ENCODE measurements at regions of chr2 and their contacts with region 1.

Region 1: GRCh38 chr2:74876081-74876886 is 42.4 kb downstream of the HK2 start:
- DNase-seq: no peak
- H3K4me3 ChIP-seq: no peak overlapping the region
- H3K27ac ChIP-seq: peak overlapping the region; percentile 26 to 34
- H3K4me1 ChIP-seq: peaks cover 0 to 10% (median 3%) of the 10 kb centered on the region in 4 donors
- H3K27me3 ChIP-seq: no peaks in the 10 kb centered on the region
- CTCF ChIP-seq: peak; percentile 65 to 74

Region 2: GRCh38 chr2:74690571-74690970 is 185.7 kb before region 1 on chr2:
- intact Hi-C with region 1: loop called (anchors 2 kb)
- DNase-seq: no peak
- H3K4me3 ChIP-seq: no peak overlapping the region
- H3K27ac ChIP-seq: no peak overlapping the region
- H3K4me1 ChIP-seq: no peaks in the 10 kb centered on the region
- H3K27me3 ChIP-seq: no peaks in the 10 kb centered on the region
- CTCF ChIP-seq: peak; percentile 51 to 61

Region 3: DNA sequence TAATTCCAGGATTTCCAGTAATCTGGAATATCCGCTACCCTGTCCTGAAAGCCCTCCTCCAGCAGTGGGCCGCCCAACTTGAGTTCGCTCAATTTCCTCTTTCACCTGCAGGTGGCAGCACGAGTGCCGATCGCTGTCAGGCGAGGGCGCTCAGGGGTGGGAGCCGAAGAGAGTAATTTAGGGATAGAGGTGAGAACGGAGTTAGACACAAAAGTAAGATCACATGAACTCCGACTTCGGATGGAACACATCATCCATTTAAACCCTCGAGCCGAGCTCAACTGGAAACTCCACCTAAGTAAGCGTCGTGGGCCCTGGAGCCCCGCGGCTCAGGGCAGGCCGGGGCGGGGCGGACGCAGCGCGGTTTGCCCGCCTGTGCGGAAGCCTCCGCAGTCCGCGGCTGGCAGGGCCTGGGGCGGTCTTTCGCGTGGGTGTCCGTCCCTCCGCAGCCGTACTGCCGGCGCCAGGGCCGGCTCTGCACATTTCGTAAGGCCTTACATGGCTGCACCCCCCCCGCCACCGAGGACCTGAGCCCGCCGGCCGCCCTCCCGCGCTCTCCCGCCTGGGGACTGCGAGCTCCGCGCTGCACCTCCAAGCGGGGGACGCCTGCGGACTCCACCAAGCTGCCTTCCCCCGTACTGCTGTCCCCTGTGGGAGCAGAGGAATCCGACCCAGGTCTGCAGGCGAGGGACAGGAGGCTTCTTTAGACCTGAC is 161.0 kb before region 1 on chr2:
- intact Hi-C with region 1: loop called (anchors 2 kb)
- DNase-seq: peak; percentile 81 to 86
- H3K4me3 ChIP-seq: peak overlapping the region; percentile 52 to 76
- H3K27ac ChIP-seq: peak overlapping the region; percentile 70 to 75
- H3K4me1 ChIP-seq: peaks cover 0 to 10% (median 7%) of the 10 kb centered on the region in 4 donors
- H3K27me3 ChIP-seq: no peaks in the 10 kb centered on the region
- CTCF ChIP-seq: peak; percentile 77 to 82

Region 4: DNA sequence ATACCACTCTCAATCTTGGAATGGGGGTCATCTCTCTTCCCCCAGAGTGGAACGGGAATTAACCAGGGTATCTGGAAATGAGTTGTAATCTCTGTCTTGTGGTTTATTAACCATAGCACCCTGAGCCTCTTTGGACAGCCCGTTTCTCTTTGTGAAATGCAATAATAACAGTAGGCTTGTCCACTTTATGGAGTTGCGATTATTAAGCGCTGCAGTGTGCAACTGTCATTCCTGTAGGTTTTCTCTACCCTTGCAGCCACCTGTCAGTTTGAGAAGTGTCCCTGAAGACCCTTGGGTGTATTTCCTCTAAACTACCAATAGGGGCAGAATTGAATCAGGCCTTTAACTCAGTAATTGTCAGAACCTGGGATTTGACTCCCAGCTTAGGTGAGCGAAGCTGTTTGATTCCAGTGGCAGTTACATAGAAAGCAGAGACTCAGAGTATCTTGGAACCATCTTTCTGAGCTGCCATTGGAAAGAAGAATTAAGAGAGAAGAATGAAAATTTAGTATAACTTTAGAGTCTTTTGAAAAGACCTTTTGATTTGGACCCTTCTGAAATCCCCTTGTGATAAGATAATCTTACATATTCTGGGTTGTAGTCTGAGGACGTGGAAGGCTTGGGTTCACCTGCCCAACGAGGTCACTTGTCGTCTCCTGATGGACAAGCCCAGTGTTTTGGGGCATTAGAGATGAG is 39.8 kb before region 1 on chr2:
- intact Hi-C with region 1: loop called (anchors 2 kb)
- DNase-seq: no peak
- H3K4me3 ChIP-seq: peak overlapping the region; percentile 59 to 69
- H3K27ac ChIP-seq: peak overlapping the region; percentile 42 to 84
- H3K4me1 ChIP-seq: peaks cover 0 to 29% (median 13%) of the 10 kb centered on the region in 4 donors
- H3K27me3 ChIP-seq: no peaks in the 10 kb centered on the region
- CTCF ChIP-seq: peak; percentile 56 to 57

Measured in tibial artery (tissue), 4 donors.